ENCODE measurements at regions of chr1 and their contacts with region 1.

Region 1: GRCh38 chr1:8040586-8040985 is 14.5 kb upstream of the ERRFI1 start:
- DNase-seq: peak; percentile 96
- H3K4me3 ChIP-seq: no peak overlapping the region
- H3K27ac ChIP-seq: peak overlapping the region; percentile 66
- H3K4me1 ChIP-seq: peaks cover 23% of the 10 kb centered on the region
- H3K27me3 ChIP-seq: no peaks in the 10 kb centered on the region
- CTCF ChIP-seq: no peak

Region 2: GRCh38 chr1:7454052-7454815 is 586.4 kb before region 1 on chr1:
- CTCF ChIA-PET with region 1: no interaction called
- dilution Hi-C with region 1: no loop called
- in situ Hi-C with region 1: no loop called
- intact Hi-C with region 1: no loop called
- DNase-seq: no peak
- H3K4me3 ChIP-seq: no peak overlapping the region
- H3K27ac ChIP-seq: no peak overlapping the region
- H3K4me1 ChIP-seq: peaks cover 9% of the 10 kb centered on the region
- H3K27me3 ChIP-seq: no peaks in the 10 kb centered on the region
- CTCF ChIP-seq: peak; percentile 7 to 33

Region 3: GRCh38 chr1:8089535-8090228 is 49.1 kb after region 1 on chr1:
- CTCF ChIA-PET with region 1: no interaction called
- dilution Hi-C with region 1: loop called (anchors 5 kb)
- in situ Hi-C with region 1: no loop called
- intact Hi-C with region 1: no loop called
- DNase-seq: peak; percentile 39
- H3K4me3 ChIP-seq: no peak overlapping the region
- H3K27ac ChIP-seq: peak overlapping the region; percentile 85
- H3K4me1 ChIP-seq: peaks cover 41% of the 10 kb centered on the region
- H3K27me3 ChIP-seq: no peaks in the 10 kb centered on the region
- CTCF ChIP-seq: no peak

Measured in mammary epithelial cell (primary cell).